ENCODE measurements at regions of chr5 and their contacts with region 1.

Region 1: DNA sequence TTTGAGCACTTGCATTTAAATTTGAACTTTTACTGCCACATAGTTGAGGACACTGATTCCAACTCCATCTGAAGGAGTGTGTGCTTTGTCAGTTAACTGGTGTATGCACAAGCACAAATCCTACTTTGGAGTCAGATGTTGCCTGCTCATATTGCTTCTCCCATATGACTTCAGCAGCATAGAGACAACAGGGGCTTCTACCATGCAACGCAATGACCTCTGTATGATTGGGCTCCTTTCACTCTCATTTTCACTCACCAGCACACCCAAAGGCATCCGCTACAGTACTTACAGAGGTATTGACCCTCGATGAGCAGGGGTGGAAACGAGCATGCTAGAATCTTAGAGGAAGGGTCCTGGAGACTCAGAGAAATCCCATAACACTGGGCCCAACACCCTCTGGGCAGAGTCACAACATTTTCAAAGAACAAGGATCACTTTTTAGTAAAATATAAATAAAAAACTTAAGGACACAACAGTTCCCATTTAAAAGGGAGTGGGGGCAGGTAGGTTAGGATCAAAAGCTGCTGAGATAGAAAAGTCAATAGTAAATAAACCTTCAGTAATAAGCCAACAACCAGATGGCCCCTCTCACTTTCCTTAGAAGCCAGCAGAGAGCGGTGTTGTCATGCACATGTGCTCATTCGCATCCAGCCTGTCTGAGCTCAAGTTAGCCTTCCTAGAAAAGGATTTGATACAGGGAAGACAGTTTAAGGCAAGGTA is 203.8 kb downstream of the SNCAIP start:
- DNase-seq: peak; percentile 82
- H3K4me3 ChIP-seq: no peak overlapping the region
- CTCF ChIP-seq: peak; percentile 83

Region 2: DNA sequence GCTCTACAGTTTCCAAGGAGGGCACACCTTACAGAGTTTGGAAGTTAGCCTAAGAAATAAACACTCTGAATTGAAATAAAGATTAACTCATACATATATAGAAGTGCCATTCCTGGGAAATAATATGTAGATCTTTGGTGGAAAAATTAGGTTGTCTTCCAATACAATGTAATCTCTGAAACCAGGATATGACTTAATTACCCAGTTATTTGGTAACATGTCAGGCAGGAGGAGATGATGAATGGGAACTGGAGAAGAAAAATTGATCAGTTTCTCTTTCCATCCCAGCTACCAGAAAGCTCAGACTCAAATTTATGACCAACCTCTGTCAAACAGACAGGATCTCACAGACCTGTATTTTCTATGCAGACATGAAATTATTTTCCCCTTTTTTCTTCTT is 43.8 kb after region 1 on chr5:
- in situ Hi-C with region 1: no loop called
- DNase-seq: no peak
- H3K4me3 ChIP-seq: no peak overlapping the region
- CTCF ChIP-seq: no peak

Region 3: GRCh38 chr5:122576256-122577016 is 60.6 kb after region 1 on chr5:
- in situ Hi-C with region 1: no loop called
- DNase-seq: peak; percentile 72
- H3K4me3 ChIP-seq: no peak overlapping the region
- CTCF ChIP-seq: peak; percentile 20

Region 4: DNA sequence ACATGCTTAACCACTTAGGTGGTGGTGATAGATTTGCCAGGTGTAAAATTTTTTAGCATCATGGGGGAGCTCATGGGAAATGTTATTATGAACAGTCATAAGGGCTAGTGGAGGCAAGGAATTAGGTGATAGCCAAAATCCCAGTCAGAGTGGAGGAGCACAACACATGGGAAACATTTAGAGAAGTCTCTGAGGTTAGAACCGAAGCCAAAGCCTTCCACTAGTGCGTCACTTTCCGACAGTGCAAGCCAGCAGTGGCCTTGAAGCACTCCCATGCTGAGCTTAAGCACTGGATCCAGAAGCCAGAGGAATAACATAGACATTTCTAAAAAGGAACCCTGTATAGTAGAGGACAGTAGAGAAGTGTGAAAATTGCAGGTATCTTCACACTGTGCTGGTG is 157.5 kb after region 1 on chr5:
- in situ Hi-C with region 1: no loop called
- DNase-seq: peak; percentile 46
- H3K4me3 ChIP-seq: no peak overlapping the region
- CTCF ChIP-seq: no peak

Region 5: DNA sequence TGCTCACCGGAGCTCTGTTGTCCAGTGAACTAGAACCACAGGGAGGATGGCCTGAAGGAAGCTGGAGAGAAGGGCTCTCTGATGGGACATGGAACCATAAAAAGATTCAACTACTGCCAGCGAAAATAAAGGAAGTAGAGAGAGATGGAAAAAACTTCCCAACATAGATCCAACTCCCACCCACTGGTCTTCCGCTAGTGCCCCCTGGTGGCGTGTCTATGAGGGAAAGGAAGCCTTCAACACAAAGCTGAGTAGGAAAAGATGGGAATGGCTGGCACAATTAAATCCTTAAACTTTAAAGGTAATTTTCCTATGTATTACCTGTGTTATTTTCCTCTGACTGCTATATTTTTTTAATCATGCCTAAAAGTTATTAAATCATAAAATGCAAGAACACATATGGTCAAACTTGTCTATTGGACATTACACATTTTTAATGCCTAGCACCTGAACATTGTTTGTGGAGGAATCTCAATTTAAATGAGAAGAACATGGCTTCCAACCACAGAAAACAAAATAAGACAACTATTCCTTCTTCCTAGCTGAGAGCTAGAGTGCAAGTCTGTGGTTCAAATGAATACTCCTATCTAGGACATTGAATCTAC is 855.8 kb after region 1 on chr5:
- in situ Hi-C with region 1: loop called (anchors 25 kb)
- DNase-seq: no peak
- H3K4me3 ChIP-seq: no peak overlapping the region
- CTCF ChIP-seq: peak; percentile 61